T-cell (primary cell): ENCODE measurements at regions of chr6 and their contacts with region 1.

Region 1: GRCh38 chr6:98909236-98909635 is 38.5 kb downstream of the FBXL4 start:
- DNase-seq: no peak
- ATAC-seq: no peak
- H3K4me3 ChIP-seq: no peak overlapping the region
- H3K4me3 Mint-ChIP-seq: no peak overlapping the region
- H3K27ac ChIP-seq: no peak overlapping the region
- H3K27ac Mint-ChIP-seq: no peak overlapping the region
- H3K4me1 ChIP-seq: no peaks in the 10 kb centered on the region
- H3K4me1 Mint-ChIP-seq: peaks cover 0 to 2% (median 0%) of the 10 kb centered on the region in 3 donors
- H3K27me3 ChIP-seq: no peaks in the 10 kb centered on the region
- H3K27me3 Mint-ChIP-seq: no peaks in the 10 kb centered on the region

Region 2: GRCh38 chr6:98944598-98945081 is 35.4 kb after region 1 on chr6:
- CTCF ChIA-PET with region 1: no interaction called
- POLR2A ChIA-PET with region 1: interaction called in 1 of 2 experiments, 14 read pairs
- DNase-seq: no peak
- ATAC-seq: no peak
- H3K4me3 ChIP-seq: no peak overlapping the region
- H3K4me3 Mint-ChIP-seq: no peak overlapping the region
- H3K27ac ChIP-seq: no peak overlapping the region
- H3K27ac Mint-ChIP-seq: no peak overlapping the region
- H3K4me1 ChIP-seq: peaks cover 6 to 11% of the 10 kb centered on the region in 2 experiments
- H3K4me1 Mint-ChIP-seq: peaks cover 41 to 53% (median 48%) of the 10 kb centered on the region in 3 donors
- H3K27me3 ChIP-seq: no peaks in the 10 kb centered on the region
- H3K27me3 Mint-ChIP-seq: no peaks in the 10 kb centered on the region